AG04449 (cell line): ENCODE measurements at regions of chr11 and their contacts with region 1.

Region 1: GRCh38 chr11:65251476-65251875 is 10.3 kb upstream of the POLA2 start:
- DNase-seq: no peak
- H3K4me3 ChIP-seq: no peak overlapping the region
- CTCF ChIP-seq: no peak

Region 2: GRCh38 chr11:65204646-65205601 is 46.6 kb before region 1 on chr11:
- CTCF ChIA-PET with region 1: interaction called, 34 read pairs
- POLR2A ChIA-PET with region 1: no interaction called
- DNase-seq: no peak
- H3K4me3 ChIP-seq: no peak overlapping the region
- CTCF ChIP-seq: peak; percentile 88